ENCODE measurements at regions of chr6 and their contacts with region 1.

Region 1: DNA sequence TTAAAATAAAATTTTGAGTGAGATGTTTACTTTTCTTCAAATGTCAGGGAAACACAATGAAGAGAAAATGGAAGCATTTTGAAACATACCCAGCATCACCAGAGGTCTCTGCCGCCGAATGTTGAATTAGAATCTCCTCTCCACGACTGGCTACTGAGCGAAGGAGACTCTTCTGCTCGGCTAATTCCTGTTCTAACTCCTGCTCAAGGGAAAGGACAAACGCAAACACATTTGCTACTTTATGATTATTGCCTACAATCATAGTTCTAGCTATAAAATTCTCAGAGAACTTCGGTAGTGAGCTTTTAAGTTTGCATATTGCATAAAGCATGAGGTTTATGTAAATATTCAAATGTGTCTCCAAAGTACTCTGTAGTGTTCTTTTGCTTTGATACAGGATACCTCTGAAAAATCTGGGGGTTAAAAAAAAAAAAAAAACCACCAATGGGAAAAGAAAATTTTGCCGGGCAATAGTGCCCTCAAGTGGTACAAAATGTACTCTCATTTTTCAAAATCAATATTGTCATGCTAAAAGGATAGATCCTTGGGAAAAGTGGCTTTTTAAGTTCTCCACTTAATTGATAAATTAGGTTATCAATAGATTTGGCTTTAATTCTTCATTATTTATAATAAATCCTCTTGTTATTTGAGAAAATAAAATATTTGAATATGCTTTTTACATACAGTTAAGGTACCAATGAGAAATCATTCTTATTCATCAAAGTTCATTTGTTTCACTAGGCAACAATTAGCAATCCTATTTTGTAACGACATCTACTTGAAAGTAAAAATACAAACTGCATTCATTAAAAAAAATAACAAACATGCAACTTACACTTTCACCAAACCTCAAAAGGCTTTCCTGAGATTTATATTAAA is 369.0 kb downstream of the SYNE1 start:
- DNase-seq: no peak
- ATAC-seq: no peak
- H3K4me3 ChIP-seq: no peak overlapping the region
- H3K27ac ChIP-seq: peak overlapping the region in 4 of 12 donors; percentile 0 to 17 (median 9)
- H3K4me1 ChIP-seq: peaks cover 6 to 54% (median 37%) of the 10 kb centered on the region in 12 donors
- H3K27me3 ChIP-seq: no peaks in the 10 kb centered on the region
- CTCF ChIP-seq: peak; percentile 30 to 73 (median 53)
- POLR2A ChIP-seq: no peak

Region 2: GRCh38 chr6:151690768-151691562 is 577.2 kb before region 1 on chr6:
- intact Hi-C with region 1: loop called in 3 of 10 experiments (anchors 5 to 10 kb)
- DNase-seq: no peak
- ATAC-seq: peak in 3 of 4 donors; percentile 68 to 80 (median 75)
- H3K4me3 ChIP-seq: peak overlapping the region in 10 of 12 donors; percentile 3 to 57 (median 38)
- H3K27ac ChIP-seq: peak overlapping the region; percentile 13 to 88 (median 70)
- H3K4me1 ChIP-seq: peaks cover 0 to 12% (median 0%) of the 10 kb centered on the region in 12 donors
- H3K27me3 ChIP-seq: no peaks in the 10 kb centered on the region
- CTCF ChIP-seq: no peak
- POLR2A ChIP-seq: no peak

Region 3: DNA sequence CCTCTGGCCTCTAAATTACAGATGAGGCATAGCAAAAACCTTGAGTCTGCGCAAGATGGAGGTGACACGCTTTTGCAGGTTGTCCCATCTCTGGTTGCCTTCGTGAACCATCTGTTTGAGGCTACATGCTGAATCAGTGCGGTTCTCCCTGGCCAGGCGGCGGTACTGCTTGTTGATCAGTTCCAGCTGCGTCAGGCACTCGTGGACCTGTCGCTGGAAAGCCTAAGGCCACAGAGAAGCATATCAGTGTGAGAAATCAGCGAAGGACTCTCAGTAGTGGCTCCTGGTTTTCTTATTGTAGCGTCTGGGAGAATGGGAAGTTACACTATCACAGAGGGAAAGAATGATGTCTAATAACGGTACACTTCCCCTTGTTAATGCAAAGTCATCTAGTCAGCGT is 116.3 kb before region 1 on chr6:
- intact Hi-C with region 1: loop called in 1 of 10 experiments (anchors 10 kb)
- DNase-seq: no peak
- ATAC-seq: peak in 1 of 4 donors; percentile 6
- H3K4me3 ChIP-seq: no peak overlapping the region
- H3K27ac ChIP-seq: no peak overlapping the region
- H3K4me1 ChIP-seq: peaks cover 0 to 13% (median 2%) of the 10 kb centered on the region in 12 donors
- H3K27me3 ChIP-seq: no peaks in the 10 kb centered on the region
- CTCF ChIP-seq: no peak
- POLR2A ChIP-seq: no peak

Region 4: DNA sequence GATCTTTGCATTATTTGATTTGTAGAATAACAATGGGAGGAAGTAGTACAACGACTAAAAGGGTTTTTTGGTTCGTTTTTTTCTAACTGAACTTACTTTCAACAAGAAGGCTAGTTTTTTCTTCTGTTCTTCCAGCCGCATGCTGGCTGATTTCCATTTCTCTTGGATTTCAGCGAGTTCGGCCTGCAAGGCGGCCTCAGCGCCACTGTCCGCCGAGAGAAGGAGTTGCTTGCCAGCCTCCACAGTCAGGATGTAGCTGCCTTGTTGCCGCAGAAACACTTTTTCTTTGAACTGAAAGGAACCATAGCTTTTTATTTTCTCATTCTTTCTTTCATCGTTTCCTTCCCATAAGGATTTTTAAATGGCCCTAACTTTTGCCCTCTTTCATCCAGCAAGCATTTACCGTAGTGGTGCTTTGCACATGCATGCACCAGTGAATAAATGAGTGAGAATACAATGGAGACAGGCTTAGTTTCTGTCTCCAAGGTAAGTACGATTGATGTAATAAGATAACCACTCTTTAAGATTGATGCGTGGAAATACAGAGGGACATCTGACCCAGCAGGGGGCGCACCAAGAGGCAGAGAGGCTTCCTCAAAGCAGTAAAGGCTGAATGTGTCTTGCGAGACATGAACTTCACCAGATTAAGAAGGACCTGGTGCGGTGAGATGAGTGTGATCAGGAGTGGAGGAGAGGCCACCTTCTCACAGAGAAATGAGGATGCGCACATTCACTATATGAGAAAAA is 62.0 kb before region 1 on chr6:
- intact Hi-C with region 1: loop called in 3 of 10 experiments (anchors 10 kb)
- DNase-seq: no peak
- ATAC-seq: no peak
- H3K4me3 ChIP-seq: no peak overlapping the region
- H3K27ac ChIP-seq: no peak overlapping the region
- H3K4me1 ChIP-seq: no peaks in the 10 kb centered on the region
- H3K27me3 ChIP-seq: no peaks in the 10 kb centered on the region
- CTCF ChIP-seq: peak in 11 of 12 donors; percentile 20 to 53 (median 44)
- POLR2A ChIP-seq: no peak

Measured in heart left ventricle (tissue), 16 donors.